A673 (cell line): ENCODE measurements at regions of chr5 and their contacts with region 1.

Region 1: DNA sequence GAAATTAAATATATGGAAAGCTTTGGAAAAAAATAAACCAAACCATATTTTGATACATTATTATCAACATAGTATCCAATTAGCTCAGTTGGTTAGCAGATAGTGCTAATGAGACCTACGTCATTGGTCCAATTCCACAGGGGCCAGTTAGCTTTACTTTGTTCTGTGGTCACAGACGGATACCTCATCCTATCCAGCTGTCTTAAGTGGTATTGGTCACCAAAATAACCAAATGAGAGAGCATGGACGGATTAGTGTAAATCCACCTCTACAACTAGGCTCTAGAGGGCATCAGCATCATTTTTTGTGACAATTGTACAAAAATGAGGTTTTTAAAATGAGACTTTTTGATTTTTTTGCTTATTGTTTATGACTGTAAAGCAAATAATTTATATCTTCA is 364.2 kb downstream of the KIAA0825 start:
- DNase-seq: no peak
- H3K4me3 ChIP-seq: no peak overlapping the region
- H3K27ac ChIP-seq: no peak overlapping the region
- H3K4me1 ChIP-seq: no peaks in the 10 kb centered on the region
- H3K27me3 ChIP-seq: no peaks in the 10 kb centered on the region
- CTCF ChIP-seq: no peak

Region 2: GRCh38 chr5:94731471-94731870 is 477.3 kb after region 1 on chr5:
- CTCF ChIA-PET with region 1: no interaction called
- POLR2A ChIA-PET with region 1: no interaction called
- intact Hi-C with region 1: loop called (anchors 10 kb)
- DNase-seq: no peak
- H3K4me3 ChIP-seq: no peak overlapping the region
- H3K27ac ChIP-seq: no peak overlapping the region
- H3K4me1 ChIP-seq: no peaks in the 10 kb centered on the region
- H3K27me3 ChIP-seq: no peaks in the 10 kb centered on the region
- CTCF ChIP-seq: no peak